Caki2 (cell line): ENCODE measurements at regions of chr6 and their contacts with region 1.

Region 1: DNA sequence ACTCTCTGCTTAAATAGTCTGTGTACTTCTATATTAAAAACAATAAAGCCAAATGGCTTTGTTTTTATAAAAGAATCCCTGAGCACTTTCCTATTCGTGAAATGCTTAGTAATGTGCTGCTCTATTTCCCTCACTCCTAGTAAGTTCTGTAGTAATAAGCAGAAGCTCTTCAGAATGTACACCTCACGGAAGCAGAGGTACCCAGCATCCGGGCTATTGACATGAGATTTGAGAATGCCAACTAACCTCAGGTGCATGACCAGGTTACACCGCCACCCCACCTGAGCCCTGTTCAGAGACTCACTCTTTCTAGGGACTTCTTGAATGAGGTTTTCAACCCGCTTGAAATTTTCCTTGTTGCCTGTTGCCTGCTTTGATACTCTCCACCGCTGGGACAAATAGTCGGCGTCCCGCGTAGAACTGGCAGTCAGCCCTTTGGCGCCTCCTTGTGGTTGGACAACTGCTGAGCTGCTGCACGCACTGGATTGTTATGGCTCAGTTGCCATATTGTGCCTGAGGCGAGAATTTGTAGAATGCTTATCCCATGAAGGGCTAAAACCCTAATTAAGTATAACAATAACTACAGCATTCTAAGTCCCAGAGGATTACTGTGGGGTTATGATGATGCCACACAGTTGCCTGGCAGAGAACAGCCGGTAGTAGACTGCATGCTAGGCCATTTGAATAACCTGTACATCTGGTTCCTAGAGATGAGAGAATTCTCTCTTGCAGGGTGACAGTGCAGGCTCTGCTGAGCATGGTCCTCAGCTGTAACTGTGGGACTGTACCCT is 95.4 kb downstream of the KHDC1L start:
- DNase-seq: peak; percentile 72

Region 2: DNA sequence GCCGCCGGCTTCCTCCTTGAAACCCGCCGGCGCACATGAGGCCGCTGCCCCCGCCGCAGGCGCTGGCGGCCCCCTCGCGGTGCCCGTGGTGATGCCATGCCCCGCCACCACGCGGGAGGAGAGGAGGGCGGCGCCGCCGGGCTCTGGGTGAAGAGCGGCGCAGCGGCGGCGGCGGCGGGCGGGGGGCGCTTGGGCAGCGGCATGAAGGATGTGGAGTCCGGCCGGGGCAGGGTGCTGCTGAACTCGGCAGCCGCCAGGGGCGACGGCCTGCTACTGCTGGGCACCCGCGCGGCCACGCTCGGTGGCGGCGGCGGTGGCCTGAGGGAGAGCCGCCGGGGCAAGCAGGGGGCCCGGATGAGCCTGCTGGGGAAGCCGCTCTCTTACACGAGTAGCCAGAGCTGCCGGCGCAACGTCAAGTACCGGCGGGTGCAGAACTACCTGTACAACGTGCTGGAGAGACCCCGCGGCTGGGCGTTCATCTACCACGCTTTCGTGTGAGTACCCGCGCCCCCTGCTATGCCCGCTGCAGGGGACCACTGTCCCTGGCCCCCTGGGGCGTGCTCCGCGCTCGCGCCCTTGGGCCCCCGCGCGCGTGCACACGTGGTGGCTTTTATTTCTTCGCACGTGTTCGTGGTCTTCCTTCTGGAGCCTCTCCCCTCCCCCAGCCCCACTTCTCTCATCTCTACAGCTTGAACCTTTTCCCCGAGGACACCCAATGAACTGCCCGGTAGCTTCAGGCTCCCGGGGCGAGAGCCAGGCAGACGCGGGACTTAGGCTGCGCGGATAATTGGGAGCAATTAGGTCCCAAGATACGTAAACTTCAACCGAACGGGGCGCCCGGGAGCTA is 507.5 kb before region 1 on chr6:
- in situ Hi-C with region 1: loop called (anchors 25 kb)
- DNase-seq: peak; percentile 69

Region 3: DNA sequence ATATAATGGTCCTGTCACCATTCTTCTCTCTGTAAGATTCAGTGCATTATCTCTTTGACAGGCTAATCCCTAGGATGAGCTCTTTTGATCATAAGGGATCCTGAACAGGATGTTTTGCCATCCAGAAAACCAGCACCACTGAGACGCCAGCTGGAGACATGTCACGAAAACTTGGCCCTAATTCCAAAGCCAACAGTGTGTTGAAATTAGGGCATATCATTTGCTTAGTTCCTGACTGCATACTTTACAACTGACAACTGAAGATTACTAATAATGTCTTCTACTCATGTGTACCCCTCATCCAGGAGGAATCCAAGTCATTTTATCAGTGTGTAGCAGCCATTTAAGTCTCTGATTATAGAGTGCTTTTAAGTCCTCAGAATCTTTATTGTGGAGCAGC is 264.4 kb before region 1 on chr6:
- in situ Hi-C with region 1: no loop called
- DNase-seq: no peak

Region 4: DNA sequence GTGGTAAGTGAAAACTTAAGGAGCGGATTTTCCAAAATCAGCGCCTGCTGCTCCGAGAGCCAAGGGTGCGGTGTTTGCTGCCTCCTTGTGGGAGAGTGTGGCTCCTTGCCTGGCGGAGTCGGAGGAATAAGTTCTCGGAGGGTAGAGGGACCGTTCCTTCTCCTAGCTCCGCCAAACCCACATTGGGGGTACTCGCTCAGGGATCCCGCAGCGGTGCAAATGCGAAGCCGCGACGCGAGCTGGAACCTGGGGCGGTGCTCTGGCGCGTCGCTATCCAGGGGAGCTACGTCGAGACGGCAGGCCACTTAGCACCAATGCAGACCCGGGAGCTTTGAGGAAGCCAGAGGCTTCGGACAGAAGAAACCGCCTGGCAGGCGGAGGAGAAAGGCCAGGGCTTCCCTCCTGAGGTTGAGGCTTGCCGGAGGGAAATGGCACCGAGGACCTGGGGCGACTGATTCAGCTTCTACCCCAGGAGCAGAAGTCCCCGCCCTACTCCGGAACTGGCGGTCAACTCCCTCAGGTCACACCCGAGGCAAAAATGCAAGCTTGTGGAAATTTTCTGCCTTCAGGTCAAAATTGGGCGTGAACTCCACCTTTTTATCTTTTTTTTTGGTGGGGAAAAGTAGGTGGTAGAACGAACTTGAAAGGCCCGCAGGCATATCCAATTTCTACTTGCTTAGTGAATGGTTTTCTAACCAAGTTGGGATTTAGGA is 259.1 kb after region 1 on chr6:
- in situ Hi-C with region 1: no loop called
- DNase-seq: peak; percentile 69